ENCODE measurements at regions of chr9 and their contacts with region 1.

Region 1: DNA sequence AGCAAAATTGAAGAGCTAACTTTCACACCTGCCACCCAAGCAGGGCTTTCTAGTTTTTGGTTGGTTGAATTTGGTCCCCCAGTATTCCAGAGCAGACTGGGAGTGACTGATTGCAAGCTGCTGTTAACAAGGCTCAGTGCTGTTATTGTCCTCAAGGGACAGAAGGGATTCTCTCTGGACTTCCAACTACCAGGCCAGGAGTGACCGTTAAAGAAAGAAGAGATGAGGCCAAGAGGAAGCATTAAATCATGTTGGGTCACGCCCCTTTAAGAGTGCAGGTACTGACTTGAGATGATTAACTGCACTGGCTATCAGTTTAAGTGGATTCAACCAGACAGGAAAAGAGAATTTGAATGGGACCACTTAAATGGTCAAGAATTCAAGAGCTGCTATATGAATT is 220.8 kb upstream of the PCSK5 start:
- H3K4me3 ChIP-seq: no peak overlapping the region
- H3K27ac ChIP-seq: no peak overlapping the region
- H3K4me1 ChIP-seq: peaks cover 14% of the 10 kb centered on the region; the same call in 1 of the 2 replicates
- CTCF ChIP-seq: no peak

Region 2: GRCh38 chr9:75429531-75430475 is 239.9 kb before region 1 on chr9:
- CTCF ChIA-PET with region 1: no interaction called
- POLR2A ChIA-PET with region 1: no interaction called
- H3K4me3 ChIP-seq: no peak overlapping the region
- H3K27ac ChIP-seq: no peak overlapping the region
- H3K4me1 ChIP-seq: no peaks in the 10 kb centered on the region
- CTCF ChIP-seq: no peak

Region 3: GRCh38 chr9:75644649-75645048 is 25.1 kb before region 1 on chr9:
- CTCF ChIA-PET with region 1: no interaction called
- POLR2A ChIA-PET with region 1: no interaction called
- H3K4me3 ChIP-seq: no peak overlapping the region
- H3K27ac ChIP-seq: no peak overlapping the region
- H3K4me1 ChIP-seq: no peaks in the 10 kb centered on the region
- CTCF ChIP-seq: no peak

Region 4: DNA sequence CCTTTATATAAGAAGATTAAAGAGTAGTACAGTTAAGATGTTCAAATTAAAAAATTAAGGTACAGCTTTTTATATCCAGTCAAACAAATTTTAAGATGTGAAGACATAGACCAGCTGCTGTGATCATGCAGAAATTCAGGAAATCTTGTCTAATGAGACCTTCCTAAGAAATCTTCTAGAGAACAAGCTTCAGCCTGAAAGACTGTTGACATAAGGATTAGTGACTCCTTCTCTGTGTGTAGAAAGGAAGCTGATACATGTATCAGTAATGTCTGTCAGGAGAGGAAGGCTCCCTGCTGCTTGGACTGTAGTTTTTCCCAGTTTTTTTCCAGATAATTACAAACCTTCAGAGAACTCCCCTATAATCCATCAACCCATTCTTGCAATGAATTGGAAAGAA is 145.0 kb after region 1 on chr9:
- CTCF ChIA-PET with region 1: interaction called, 10 read pairs
- POLR2A ChIA-PET with region 1: no interaction called
- H3K4me3 ChIP-seq: no peak overlapping the region
- H3K27ac ChIP-seq: no peak overlapping the region
- H3K4me1 ChIP-seq: no peaks in the 10 kb centered on the region
- CTCF ChIP-seq: no peak

Measured in HEK293 (cell line).